ENCODE measurements at regions of chrX and their contacts with region 1.

Region 1: GRCh38 chrX:133670383-133670782 is 255.1 kb upstream of the GPC4 start:
- DNase-seq: no peak
- ATAC-seq: no peak
- H3K4me3 ChIP-seq: no peak overlapping the region
- H3K27ac ChIP-seq: no peak overlapping the region
- H3K4me1 ChIP-seq: no peaks in the 10 kb centered on the region
- H3K27me3 ChIP-seq: peaks cover 0 to 17% (median 0%) of the 10 kb centered on the region in 9 donors
- CTCF ChIP-seq: peak; percentile 47 to 72 (median 66)
- POLR2A ChIP-seq: no peak

Region 2: DNA sequence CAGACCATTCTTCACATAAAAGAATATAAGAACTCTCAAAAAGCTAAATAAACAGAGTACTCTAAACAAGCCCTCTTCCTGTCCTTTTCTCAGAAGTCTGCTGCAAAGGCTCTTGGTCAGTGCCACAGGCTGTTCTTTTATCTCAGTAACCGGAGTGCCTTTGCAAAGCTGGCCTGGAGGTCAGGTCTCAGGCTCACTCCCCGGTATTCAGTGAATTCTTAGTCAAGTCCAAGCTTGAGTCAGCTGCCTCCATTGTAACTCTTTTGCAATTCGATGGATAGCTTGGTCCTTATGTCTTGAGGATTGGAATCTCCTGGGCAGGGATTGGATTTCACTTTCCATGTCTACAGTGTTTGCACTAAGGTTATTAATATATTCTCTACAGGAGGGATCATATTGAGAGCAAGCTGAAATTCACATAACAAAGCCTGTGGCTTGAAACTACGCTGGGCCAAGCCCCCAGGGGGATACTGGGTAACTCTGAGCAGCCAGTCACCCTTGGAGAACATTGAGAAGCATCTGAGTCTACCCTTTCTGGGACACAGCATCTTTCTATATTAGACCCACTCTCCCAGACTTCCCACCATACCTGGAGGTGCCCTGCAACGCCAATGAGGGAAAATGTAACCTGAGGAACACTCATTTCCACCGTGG is 702.0 kb before region 1 on chrX:
- intact Hi-C with region 1: loop called in 8 of 10 experiments (anchors 5 to 10 kb)
- DNase-seq: no peak
- ATAC-seq: no peak
- H3K4me3 ChIP-seq: no peak overlapping the region
- H3K27ac ChIP-seq: no peak overlapping the region
- H3K4me1 ChIP-seq: no peaks in the 10 kb centered on the region
- H3K27me3 ChIP-seq: peaks cover 0 to 42% (median 0%) of the 10 kb centered on the region in 9 donors
- CTCF ChIP-seq: no peak
- POLR2A ChIP-seq: no peak

Region 3: GRCh38 chrX:132984058-132984650 is 686.2 kb before region 1 on chrX:
- intact Hi-C with region 1: loop called in 8 of 10 experiments (anchors 5 to 10 kb)
- DNase-seq: no peak
- ATAC-seq: no peak
- H3K4me3 ChIP-seq: no peak overlapping the region
- H3K27ac ChIP-seq: no peak overlapping the region
- H3K4me1 ChIP-seq: no peaks in the 10 kb centered on the region
- H3K27me3 ChIP-seq: peaks cover 0 to 23% (median 0%) of the 10 kb centered on the region in 9 donors
- CTCF ChIP-seq: no peak
- POLR2A ChIP-seq: no peak

Region 4: DNA sequence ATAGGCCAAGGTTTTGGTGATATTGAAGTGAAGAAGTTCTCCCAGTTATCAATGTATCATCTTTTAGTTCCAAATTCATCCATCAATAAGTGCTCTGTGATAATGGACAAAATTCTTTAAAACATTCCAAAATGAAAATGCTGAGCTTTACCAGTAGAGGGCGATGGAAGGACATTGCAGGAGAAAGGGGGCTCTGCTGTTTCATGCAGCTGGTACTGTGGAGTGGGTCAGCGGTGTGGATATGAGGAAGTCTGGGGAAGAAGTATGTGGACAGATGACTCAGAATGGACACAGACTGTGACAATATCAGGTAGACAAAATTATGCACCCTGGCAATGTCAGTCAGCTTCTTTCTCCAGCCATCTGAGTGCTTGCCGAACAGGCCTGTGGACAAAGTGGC is 665.3 kb before region 1 on chrX:
- intact Hi-C with region 1: loop called in 2 of 10 experiments (anchors 10 kb)
- DNase-seq: no peak
- ATAC-seq: no peak
- H3K4me3 ChIP-seq: no peak overlapping the region
- H3K27ac ChIP-seq: no peak overlapping the region
- H3K4me1 ChIP-seq: no peaks in the 10 kb centered on the region
- H3K27me3 ChIP-seq: peaks cover 0 to 9% (median 0%) of the 10 kb centered on the region in 9 donors
- CTCF ChIP-seq: peak; percentile 19 to 51 (median 41)
- POLR2A ChIP-seq: no peak

Region 5: GRCh38 chrX:133335027-133335426 is 335.4 kb before region 1 on chrX:
- intact Hi-C with region 1: loop called (anchors 2 to 10 kb)
- DNase-seq: peak in 2 of 5 donors; percentile 5 to 15
- ATAC-seq: no peak
- H3K4me3 ChIP-seq: no peak overlapping the region
- H3K27ac ChIP-seq: no peak overlapping the region
- H3K4me1 ChIP-seq: no peaks in the 10 kb centered on the region
- H3K27me3 ChIP-seq: peaks cover 0 to 7% (median 0%) of the 10 kb centered on the region in 9 donors
- CTCF ChIP-seq: peak; percentile 15 to 59 (median 41)
- POLR2A ChIP-seq: no peak

Region 6: DNA sequence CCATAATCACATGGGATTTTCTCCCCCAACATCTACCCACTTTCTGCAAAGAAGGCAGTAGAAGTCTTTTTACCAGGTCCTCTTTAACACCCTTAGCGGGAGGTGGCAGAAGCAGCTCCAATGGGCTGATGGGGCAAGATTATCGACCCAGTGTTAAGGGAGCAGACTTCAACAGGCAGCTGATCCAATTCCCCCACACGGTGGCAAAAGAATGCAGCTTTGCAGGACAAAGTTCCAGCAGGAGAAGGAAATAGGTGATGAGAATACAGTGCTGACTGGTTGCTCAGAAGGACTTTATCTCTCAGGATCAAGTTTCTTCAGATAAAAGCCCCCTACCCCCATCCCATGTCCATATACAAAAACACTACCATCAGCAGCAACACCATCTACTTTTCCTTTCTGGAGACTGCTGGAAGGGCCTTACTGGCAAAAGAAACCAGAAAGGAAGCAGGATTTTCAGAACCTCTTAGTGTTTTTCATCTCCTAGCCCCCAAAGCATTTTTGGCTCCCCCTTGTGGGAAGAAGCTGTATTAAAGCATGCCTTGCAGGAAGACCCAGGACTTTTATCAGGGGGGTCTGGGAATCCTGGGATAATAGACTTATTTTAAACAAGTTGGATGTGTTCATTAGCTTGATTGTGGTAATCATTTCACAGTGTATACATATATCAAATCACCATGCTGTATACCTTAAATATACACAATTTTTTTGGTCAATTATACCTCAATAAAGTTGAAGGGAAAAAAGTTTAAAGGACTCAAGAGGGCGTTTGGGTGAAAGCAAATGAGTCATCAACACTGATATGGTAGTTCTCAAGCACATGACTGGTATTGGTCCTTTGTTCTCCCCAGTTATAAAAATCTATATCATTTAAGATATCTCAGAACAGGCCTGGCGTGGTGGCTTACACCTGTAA is 168.6 kb after region 1 on chrX:
- intact Hi-C with region 1: no loop called
- DNase-seq: no peak
- ATAC-seq: no peak
- H3K4me3 ChIP-seq: no peak overlapping the region
- H3K27ac ChIP-seq: no peak overlapping the region
- H3K4me1 ChIP-seq: no peaks in the 10 kb centered on the region
- H3K27me3 ChIP-seq: peaks cover 0 to 38% (median 0%) of the 10 kb centered on the region in 9 donors
- CTCF ChIP-seq: peak; percentile 26 to 60 (median 42)
- POLR2A ChIP-seq: no peak

Measured in heart left ventricle (tissue), 16 donors.